Activated CD8-positive, alpha-beta T cell treated with anti-CD3 and anti-CD28 coated beads, Interleukin-2, amount 10 ng/mL, durations not matched to agents 7 days and 5 days (primary cell): ENCODE measurements at regions of chr2 and their contacts with region 1.

Region 1: DNA sequence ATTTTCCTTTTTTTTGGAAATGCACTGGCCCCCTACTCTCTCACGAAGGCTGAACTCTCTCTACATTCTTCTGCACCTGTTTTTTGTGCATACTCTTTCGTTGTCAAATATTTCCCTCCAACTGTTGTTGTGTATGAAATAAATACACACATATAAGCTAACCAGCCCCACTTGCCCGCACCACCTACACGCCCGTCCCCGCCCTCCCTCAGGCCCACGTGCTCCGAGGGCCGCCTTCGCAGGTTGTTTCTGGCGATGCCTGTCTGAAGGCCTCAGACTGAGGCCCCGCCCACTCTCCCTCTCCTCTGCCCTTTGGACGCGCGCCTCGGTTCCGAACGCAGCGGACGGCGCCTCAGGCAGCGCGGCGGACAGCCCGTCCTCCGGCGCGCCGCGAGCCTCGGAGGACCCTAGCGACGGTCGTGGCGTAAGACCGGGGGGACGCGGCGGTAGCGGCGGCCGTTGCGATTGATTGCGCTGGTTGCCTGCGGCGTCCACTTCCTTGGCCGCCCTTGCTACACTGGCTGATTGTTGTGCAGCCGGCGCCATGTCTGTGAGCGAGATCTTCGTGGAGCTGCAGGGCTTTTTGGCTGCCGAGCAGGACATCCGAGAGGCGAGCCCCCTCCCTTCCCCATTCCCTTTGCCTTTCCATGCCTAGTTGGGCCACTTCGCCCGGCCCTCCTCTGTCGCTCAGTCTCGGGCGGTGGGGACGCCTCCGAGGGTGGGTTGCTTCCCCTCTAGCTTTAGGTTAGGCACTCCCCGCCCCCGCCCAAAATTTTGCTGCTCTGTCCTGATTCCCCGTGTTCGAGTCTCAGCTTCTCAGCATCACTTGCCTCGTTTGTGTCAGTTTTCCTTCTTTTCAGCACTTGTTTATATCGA is at the start of gene TSN:
- DNase-seq: peak; percentile 99
- ATAC-seq: peak; percentile 100
- H3K4me3 Mint-ChIP-seq: peak within 1 kb of the TSS; percentile 99
- H3K27ac Mint-ChIP-seq: peak within 1 kb of the TSS; percentile 97
- H3K4me1 Mint-ChIP-seq: peaks cover 26% of the 10 kb centered on the region
- H3K27me3 Mint-ChIP-seq: no peaks in the 10 kb centered on the region
- total RNA-seq, gene TSN: 55.4 to 57.9 TPM

Region 2: DNA sequence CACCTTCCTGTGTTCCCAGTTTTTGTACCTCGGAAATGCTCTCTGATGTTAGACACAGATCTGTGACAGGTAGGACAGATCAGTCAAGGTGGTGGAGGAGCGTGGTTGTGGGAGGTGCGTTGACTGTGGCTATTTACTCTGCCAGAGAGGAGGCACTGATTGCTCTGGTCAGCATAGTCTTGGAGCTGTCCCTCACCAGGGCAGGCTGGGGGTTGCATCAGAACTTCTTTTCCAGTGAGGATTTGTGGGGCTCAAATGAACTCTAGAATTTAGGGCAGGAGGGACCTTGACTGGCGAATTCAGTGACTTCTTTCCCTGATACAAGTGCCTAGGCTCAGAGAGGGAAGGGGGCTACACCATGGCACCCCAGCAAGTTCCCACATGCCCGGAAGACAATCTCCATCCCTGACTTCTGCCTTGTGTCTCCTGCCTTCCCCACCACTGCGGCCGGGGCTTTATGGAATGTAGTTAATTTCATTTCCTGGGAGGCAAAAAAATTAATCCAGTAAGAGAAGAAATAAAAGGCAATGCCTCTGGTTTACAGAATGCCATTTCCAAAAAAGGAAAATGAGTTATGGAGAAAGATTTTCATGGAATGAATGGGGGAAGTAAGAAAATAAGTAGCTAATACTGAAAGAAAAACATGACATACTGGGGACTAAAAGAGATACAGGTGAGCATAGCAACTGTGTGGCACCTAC is 44.9 kb before region 1 on chr2:
- CTCF ChIA-PET with region 1: no interaction called
- POLR2A ChIA-PET with region 1: no interaction called
- DNase-seq: no peak
- ATAC-seq: no peak
- H3K4me3 Mint-ChIP-seq: no peak overlapping the region
- H3K27ac Mint-ChIP-seq: no peak overlapping the region
- H3K4me1 Mint-ChIP-seq: peaks cover 6% of the 10 kb centered on the region
- H3K27me3 Mint-ChIP-seq: peaks cover 10% of the 10 kb centered on the region

Region 3: DNA sequence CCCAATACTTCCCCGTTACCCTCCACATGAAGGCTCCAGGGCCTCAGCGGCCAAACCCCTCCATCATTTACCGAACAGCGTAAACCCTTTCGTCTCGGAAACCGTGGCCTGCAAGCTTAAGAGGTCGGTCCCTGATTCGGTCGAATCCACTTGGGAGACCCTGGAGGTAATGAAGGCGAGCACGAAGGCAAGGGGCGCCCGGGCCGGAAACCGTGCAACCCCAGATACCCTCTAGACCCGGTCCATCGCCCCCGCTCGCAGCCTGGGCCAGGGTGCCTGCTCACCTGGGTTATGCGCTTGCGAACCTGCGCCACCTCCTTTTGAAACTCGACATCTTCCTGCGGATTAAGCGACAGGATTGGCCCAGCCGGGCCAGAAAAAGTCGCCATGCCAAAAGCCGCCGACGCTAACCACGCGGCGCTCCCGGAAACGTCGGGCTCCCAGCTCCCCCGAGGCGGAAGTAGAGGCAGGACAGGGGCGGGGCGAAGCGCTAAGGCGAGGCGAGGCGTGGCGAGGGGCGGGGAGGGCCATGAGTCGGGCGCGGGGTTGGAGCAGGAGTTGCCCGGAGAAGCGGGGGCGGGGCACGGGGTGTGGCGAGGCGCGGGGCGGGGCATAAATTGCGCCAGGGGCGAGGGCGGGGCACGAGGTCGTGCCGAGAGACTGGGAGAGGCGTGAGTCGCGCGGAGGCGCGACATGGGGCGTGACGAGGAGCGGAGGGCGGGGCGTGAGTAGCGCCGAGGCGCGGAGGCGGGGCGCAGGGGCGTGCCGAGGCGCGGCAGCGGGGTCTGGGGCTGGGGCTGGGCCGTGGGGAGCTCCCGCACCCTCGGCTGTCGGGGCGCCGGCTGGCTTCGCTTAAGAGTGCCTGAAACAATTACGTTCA is 18.8 kb before region 1 on chr2 and contains the start of gene NIFK:
- CTCF ChIA-PET with region 1: interaction called, 10 read pairs
- POLR2A ChIA-PET with region 1: interaction called, 26 read pairs
- DNase-seq: peak; percentile 100
- ATAC-seq: peak; percentile 92
- H3K4me3 Mint-ChIP-seq: peak within 1 kb of the TSS; percentile 98
- H3K27ac Mint-ChIP-seq: peak within 1 kb of the TSS; percentile 97
- H3K4me1 Mint-ChIP-seq: peaks cover 47% of the 10 kb centered on the region
- H3K27me3 Mint-ChIP-seq: peaks cover 3% of the 10 kb centered on the region
- total RNA-seq, gene NIFK: 79.8 to 80.1 TPM

Region 4: GRCh38 chr2:121771976-121772742 is 16.7 kb after region 1 on chr2:
- CTCF ChIA-PET with region 1: no interaction called
- POLR2A ChIA-PET with region 1: no interaction called
- DNase-seq: no peak
- ATAC-seq: no peak
- H3K4me3 Mint-ChIP-seq: no peak overlapping the region
- H3K27ac Mint-ChIP-seq: no peak overlapping the region
- H3K4me1 Mint-ChIP-seq: no peaks in the 10 kb centered on the region
- H3K27me3 Mint-ChIP-seq: no peaks in the 10 kb centered on the region

Region 5: GRCh38 chr2:121783180-121783579 is 27.7 kb after region 1 on chr2:
- CTCF ChIA-PET with region 1: no interaction called
- POLR2A ChIA-PET with region 1: no interaction called
- DNase-seq: no peak
- ATAC-seq: no peak
- H3K4me3 Mint-ChIP-seq: no peak overlapping the region
- H3K27ac Mint-ChIP-seq: no peak overlapping the region
- H3K4me1 Mint-ChIP-seq: no peaks in the 10 kb centered on the region
- H3K27me3 Mint-ChIP-seq: peaks cover 18% of the 10 kb centered on the region

Region 6: GRCh38 chr2:121897335-121897970 is 142.0 kb after region 1 on chr2:
- CTCF ChIA-PET with region 1: no interaction called
- POLR2A ChIA-PET with region 1: no interaction called
- DNase-seq: no peak
- ATAC-seq: no peak
- H3K4me3 Mint-ChIP-seq: no peak overlapping the region
- H3K27ac Mint-ChIP-seq: no peak overlapping the region
- H3K4me1 Mint-ChIP-seq: no peaks in the 10 kb centered on the region
- H3K27me3 Mint-ChIP-seq: no peaks in the 10 kb centered on the region